CD4-positive, alpha-beta memory T cell (primary cell): ENCODE measurements at regions of chr19 and their contacts with region 1.

Region 1: DNA sequence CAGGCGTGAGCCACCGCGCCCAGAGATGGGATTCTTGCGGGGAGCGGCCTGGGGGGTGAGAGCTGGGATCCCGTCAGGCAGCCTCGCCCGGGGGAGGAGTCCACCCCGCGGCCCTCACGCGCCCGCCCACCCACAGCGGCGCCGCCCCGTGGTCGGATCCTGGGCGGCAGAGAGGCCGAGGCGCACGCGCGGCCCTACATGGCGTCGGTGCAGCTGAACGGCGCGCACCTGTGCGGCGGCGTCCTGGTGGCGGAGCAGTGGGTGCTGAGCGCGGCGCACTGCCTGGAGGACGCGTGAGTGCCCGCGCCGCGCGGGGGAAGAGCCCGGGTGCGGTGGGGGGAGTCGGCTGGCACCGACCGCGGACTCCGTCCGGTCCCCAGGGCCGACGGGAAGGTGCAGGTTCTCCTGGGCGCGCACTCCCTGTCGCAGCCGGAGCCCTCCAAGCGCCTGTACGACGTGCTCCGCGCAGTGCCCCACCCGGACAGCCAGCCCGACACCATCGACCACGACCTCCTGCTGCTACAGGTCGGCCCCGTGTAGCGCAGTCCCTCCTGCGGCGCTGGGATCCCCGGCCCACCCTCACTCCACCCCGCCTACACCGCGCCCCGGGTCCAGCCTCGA is 1.1 kb downstream of the CFD start:
- DNase-seq: peak in 4 of 5 donors; percentile 55 to 58 (median 56)
- H3K4me3 ChIP-seq: peak overlapping the region in 1 of 2 donors; percentile 13
- H3K4me3 Mint-ChIP-seq: no peak overlapping the region
- H3K27ac ChIP-seq: no peak overlapping the region
- H3K27ac Mint-ChIP-seq: no peak overlapping the region
- H3K4me1 ChIP-seq: peaks cover 19% of the 10 kb centered on the region
- H3K4me1 Mint-ChIP-seq: peaks cover 5 to 28% (median 16%) of the 10 kb centered on the region in 4 donors
- H3K27me3 ChIP-seq: peaks cover 3% of the 10 kb centered on the region
- H3K27me3 Mint-ChIP-seq: peaks cover 2 to 4% of the 10 kb centered on the region in 2 donors

Region 2: GRCh38 chr19:771332-771785 is 89.2 kb before region 1 on chr19:
- CTCF ChIA-PET with region 1: interaction called, 15 read pairs
- POLR2A ChIA-PET with region 1: no interaction called
- intact Hi-C with region 1: loop called (anchors 1 kb)
- DNase-seq: peak in 3 of 5 donors; percentile 15 to 18 (median 17)
- H3K4me3 ChIP-seq: no peak overlapping the region
- H3K4me3 Mint-ChIP-seq: no peak overlapping the region
- H3K27ac ChIP-seq: no peak overlapping the region
- H3K27ac Mint-ChIP-seq: no peak overlapping the region
- H3K4me1 ChIP-seq: no peaks in the 10 kb centered on the region
- H3K4me1 Mint-ChIP-seq: peaks cover 0 to 4% (median 2%) of the 10 kb centered on the region in 4 donors
- H3K27me3 ChIP-seq: no peaks in the 10 kb centered on the region
- H3K27me3 Mint-ChIP-seq: peaks cover 4% of the 10 kb centered on the region in 2 donors

Region 3: GRCh38 chr19:814258-815078 is 46.1 kb before region 1 on chr19:
- CTCF ChIA-PET with region 1: no interaction called
- POLR2A ChIA-PET with region 1: no interaction called
- intact Hi-C with region 1: no loop called
- DNase-seq: no peak
- H3K4me3 ChIP-seq: no peak overlapping the region
- H3K4me3 Mint-ChIP-seq: peak overlapping the region in 1 of 8 donors; percentile 46
- H3K27ac ChIP-seq: no peak overlapping the region
- H3K27ac Mint-ChIP-seq: peak overlapping the region in 3 of 7 donors; percentile 32 to 68 (median 35)
- H3K4me1 ChIP-seq: no peaks in the 10 kb centered on the region
- H3K4me1 Mint-ChIP-seq: peaks cover 0 to 8% (median 3%) of the 10 kb centered on the region in 4 donors
- H3K27me3 ChIP-seq: no peaks in the 10 kb centered on the region
- H3K27me3 Mint-ChIP-seq: no peaks in the 10 kb centered on the region

Region 4: DNA sequence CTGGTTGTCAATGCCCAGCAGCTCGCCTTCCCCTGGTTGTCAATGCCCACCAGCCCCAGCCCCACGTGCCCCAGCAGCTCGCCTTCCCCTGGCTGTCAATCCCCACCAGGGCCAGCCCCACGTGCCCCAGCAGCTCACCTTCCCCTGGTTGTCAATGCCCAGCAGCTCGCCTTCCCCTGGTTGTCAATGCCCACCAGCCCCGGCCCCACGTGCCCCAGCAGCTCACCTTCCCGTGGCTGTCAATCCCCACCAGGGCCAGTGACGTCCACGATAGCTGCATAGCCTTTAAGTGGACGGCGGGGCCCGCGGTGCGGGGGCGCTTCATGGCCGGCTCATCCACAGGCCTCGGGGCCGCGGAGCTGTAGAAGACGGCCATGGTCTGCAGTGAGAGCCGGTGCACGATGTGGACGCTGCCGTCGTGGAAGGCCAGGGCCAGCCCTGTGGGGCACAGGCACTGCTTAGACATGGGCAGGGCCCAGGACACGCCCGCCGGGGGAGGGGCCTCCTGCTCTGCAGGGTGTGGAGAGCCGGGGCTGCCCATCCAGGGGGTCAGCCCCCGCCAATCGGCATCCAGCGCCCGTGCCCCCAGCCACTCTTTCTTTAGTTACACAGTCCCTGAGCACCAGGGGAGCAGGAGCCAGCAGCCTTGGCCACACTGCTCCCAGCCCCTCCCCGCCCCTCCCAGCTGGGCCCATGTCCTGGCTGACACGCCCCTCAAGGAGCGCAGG is 19.3 kb after region 1 on chr19:
- CTCF ChIA-PET with region 1: interaction called, 11 read pairs
- POLR2A ChIA-PET with region 1: no interaction called
- intact Hi-C with region 1: no loop called
- DNase-seq: no peak
- H3K4me3 ChIP-seq: no peak overlapping the region
- H3K4me3 Mint-ChIP-seq: no peak overlapping the region
- H3K27ac ChIP-seq: no peak overlapping the region
- H3K27ac Mint-ChIP-seq: peak overlapping the region in 1 of 7 donors; percentile 29
- H3K4me1 ChIP-seq: no peaks in the 10 kb centered on the region
- H3K4me1 Mint-ChIP-seq: peaks cover 0 to 4% (median 0%) of the 10 kb centered on the region in 4 donors
- H3K27me3 ChIP-seq: no peaks in the 10 kb centered on the region
- H3K27me3 Mint-ChIP-seq: no peaks in the 10 kb centered on the region

Region 5: GRCh38 chr19:907183-907853 is 46.7 kb after region 1 on chr19:
- CTCF ChIA-PET with region 1: interaction called, 23 read pairs
- POLR2A ChIA-PET with region 1: interaction called, 60 read pairs
- intact Hi-C with region 1: loop called (anchors 2 kb)
- DNase-seq: no peak
- H3K4me3 ChIP-seq: no peak overlapping the region
- H3K4me3 Mint-ChIP-seq: peak overlapping the region; percentile 43 to 89 (median 62)
- H3K27ac ChIP-seq: peak overlapping the region; percentile 89
- H3K27ac Mint-ChIP-seq: peak overlapping the region; percentile 93 to 100 (median 100)
- H3K4me1 ChIP-seq: peaks cover 70% of the 10 kb centered on the region
- H3K4me1 Mint-ChIP-seq: peaks cover 19 to 72% (median 44%) of the 10 kb centered on the region in 4 donors
- H3K27me3 ChIP-seq: no peaks in the 10 kb centered on the region
- H3K27me3 Mint-ChIP-seq: no peaks in the 10 kb centered on the region

Region 6: DNA sequence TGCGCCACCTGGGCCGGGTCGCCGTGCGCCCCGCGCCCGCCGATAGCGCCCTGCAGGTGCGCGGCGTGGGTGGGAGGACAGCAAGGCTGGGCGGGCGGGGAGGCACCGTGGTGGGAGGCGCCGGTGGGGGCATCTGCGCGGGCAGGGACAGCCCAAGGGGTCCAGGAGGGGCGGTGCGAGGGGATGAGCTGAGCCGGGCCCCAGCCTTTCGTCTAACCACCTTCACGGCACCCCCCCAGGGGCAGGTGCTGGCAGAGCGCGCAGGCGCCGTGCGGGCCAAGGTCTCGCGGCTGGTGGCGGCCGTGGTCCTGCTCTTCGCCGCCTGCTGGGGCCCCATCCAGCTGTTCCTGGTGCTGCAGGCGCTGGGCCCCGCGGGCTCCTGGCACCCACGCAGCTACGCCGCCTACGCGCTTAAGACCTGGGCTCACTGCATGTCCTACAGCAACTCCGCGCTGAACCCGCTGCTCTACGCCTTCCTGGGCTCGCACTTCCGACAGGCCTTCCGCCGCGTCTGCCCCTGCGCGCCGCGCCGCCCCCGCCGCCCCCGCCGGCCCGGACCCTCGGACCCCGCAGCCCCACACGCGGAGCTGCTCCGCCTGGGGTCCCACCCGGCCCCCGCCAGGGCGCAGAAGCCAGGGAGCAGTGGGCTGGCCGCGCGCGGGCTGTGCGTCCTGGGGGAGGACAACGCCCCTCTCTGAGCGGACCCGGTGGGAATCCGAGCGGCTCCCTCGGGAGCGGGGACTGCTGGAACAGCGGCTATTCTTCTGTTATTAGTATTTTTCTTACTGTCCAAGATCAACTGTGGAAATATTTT is 59.7 kb after region 1 on chr19:
- CTCF ChIA-PET with region 1: interaction called, 119 read pairs
- POLR2A ChIA-PET with region 1: interaction called, 86 read pairs
- intact Hi-C with region 1: loop called (anchors 1 kb)
- DNase-seq: peak; percentile 72 to 77 (median 74)
- H3K4me3 ChIP-seq: peak overlapping the region in 1 of 2 donors; percentile 51
- H3K4me3 Mint-ChIP-seq: peak overlapping the region; percentile 72 to 96 (median 79)
- H3K27ac ChIP-seq: peak overlapping the region; percentile 31
- H3K27ac Mint-ChIP-seq: peak overlapping the region; percentile 30 to 96 (median 76)
- H3K4me1 ChIP-seq: peaks cover 48% of the 10 kb centered on the region
- H3K4me1 Mint-ChIP-seq: peaks cover 9 to 26% (median 18%) of the 10 kb centered on the region in 4 donors
- H3K27me3 ChIP-seq: no peaks in the 10 kb centered on the region
- H3K27me3 Mint-ChIP-seq: peaks cover 0 to 4% of the 10 kb centered on the region in 2 donors

Region 7: DNA sequence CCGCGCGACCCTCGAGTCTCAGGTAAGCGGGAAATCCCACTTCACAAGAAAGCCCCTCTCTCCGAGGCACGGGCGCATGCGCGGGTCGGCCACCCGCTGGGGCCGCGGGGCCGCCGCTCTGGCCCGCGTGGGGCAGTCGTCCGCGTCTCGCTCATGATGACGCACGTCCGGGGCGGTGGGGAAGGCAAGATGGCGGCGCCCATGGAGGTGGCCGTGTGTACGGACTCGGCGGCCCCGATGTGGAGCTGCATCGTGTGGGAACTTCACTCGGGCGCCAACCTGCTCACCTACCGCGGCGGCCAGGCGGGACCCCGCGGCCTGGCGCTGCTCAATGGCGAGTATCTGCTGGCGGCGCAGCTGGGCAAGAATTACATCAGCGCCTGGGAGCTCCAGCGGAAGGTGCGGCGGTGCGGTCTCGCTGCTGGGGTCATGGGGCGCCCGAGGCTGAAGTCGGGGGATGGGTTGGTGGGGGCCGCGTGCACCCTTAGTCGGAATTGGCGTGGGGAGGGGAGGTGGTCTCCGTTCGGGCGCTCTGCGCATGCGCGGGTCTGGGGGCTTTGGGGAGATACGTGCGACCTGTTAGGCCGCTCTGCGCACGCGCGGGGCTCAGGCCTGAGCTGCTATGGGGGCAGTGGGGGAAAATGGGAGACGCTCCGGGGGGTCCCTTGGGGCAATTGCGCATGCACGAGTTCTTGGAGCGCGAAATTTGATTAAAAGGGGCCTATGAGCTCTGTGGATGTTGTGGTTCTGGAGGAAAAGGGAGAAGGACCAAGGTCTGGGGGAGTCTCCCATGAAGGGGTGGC is 123.8 kb after region 1 on chr19 and contains the start of gene WDR18:
- CTCF ChIA-PET with region 1: interaction called, 29 read pairs
- POLR2A ChIA-PET with region 1: interaction called, 16 read pairs
- intact Hi-C with region 1: loop called (anchors 1 kb)
- DNase-seq: peak; percentile 79 to 87 (median 81)
- H3K4me3 ChIP-seq: peak within 1 kb of the TSS; percentile 65 to 69
- H3K4me3 Mint-ChIP-seq: peak within 1 kb of the TSS; percentile 89 to 96 (median 92)
- H3K27ac ChIP-seq: peak within 1 kb of the TSS; percentile 75
- H3K27ac Mint-ChIP-seq: peak within 1 kb of the TSS; percentile 84 to 96 (median 90)
- H3K4me1 ChIP-seq: peaks cover 24% of the 10 kb centered on the region
- H3K4me1 Mint-ChIP-seq: peaks cover 4 to 18% (median 12%) of the 10 kb centered on the region in 4 donors
- H3K27me3 ChIP-seq: no peaks in the 10 kb centered on the region
- H3K27me3 Mint-ChIP-seq: no peaks in the 10 kb centered on the region
- total RNA-seq, gene WDR18: 53.9 to 60.3 TPM